Heart right ventricle (tissue), 16 donors: ENCODE measurements at regions of chrX and their contacts with region 1.

Region 1: GRCh38 chrX:23008431-23009099 is 8.8 kb downstream of the DDX53 start:
- DNase-seq: no peak
- ATAC-seq: peak in 1 of 8 donors; percentile 17
- H3K4me3 ChIP-seq: no peak overlapping the region
- H3K27ac ChIP-seq: peak overlapping the region in 4 of 10 donors; percentile 4 to 44 (median 23)
- H3K4me1 ChIP-seq: no peaks in the 10 kb centered on the region
- H3K27me3 ChIP-seq: peaks cover 0 to 4% (median 0%) of the 10 kb centered on the region in 7 donors
- CTCF ChIP-seq: peak in 7 of 9 donors; percentile 13 to 41 (median 28)

Region 2: DNA sequence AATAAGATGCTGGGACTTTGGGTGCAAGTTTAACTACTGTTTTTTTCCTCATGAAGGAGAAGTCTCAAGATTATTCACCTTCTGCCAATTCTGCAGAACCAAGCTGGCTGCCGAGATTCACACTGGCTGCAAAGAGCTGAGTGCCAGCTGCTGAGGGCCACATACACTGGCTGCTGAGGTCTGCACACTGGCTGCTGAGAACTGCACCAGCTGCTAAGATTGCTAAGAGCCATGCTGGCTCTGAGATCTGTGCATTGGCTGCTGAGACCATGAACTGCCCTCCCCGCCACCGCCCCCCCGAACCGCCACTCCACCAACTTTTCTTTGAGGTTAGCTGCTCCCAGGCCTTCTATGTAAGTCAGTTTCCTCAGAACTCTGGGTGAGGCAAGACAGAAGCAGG is 405.5 kb before region 1 on chrX:
- intact Hi-C with region 1: no loop called
- DNase-seq: no peak
- ATAC-seq: no peak
- H3K4me3 ChIP-seq: no peak overlapping the region
- H3K27ac ChIP-seq: no peak overlapping the region
- H3K4me1 ChIP-seq: no peaks in the 10 kb centered on the region
- H3K27me3 ChIP-seq: no peaks in the 10 kb centered on the region
- CTCF ChIP-seq: no peak

Region 3: GRCh38 chrX:23317799-23318724 is 309.5 kb after region 1 on chrX:
- intact Hi-C with region 1: loop called in 1 of 10 experiments (anchors 10 kb)
- DNase-seq: no peak
- ATAC-seq: peak in 5 of 8 donors; percentile 47 to 75 (median 59)
- H3K4me3 ChIP-seq: no peak overlapping the region
- H3K27ac ChIP-seq: no peak overlapping the region
- H3K4me1 ChIP-seq: no peaks in the 10 kb centered on the region
- H3K27me3 ChIP-seq: peaks cover 0 to 5% (median 0%) of the 10 kb centered on the region in 7 donors
- CTCF ChIP-seq: peak; percentile 18 to 77 (median 51)

Region 4: DNA sequence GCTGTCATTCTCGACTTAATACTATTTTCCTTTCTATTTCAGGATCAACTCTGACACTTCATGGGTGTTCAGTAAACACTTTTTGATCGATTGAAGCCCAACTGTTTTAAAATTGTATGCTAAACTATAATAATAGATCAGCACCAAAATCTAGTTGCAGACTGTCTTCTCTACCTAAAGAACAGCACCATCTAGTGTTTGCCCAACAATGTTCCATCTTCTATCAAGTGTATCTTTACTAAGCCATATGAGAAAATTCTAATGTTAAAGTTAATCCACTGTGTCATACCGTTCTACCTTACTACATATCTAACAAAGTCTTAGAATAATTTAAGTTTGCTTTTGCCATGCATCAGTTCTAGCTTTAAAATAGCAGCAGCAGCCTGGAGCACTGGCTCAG is 545.7 kb after region 1 on chrX:
- intact Hi-C with region 1: loop called in 1 of 10 experiments (anchors 10 kb)
- DNase-seq: no peak
- ATAC-seq: no peak
- H3K4me3 ChIP-seq: no peak overlapping the region
- H3K27ac ChIP-seq: no peak overlapping the region
- H3K4me1 ChIP-seq: no peaks in the 10 kb centered on the region
- H3K27me3 ChIP-seq: peaks cover 0 to 24% (median 0%) of the 10 kb centered on the region in 7 donors
- CTCF ChIP-seq: peak in 8 of 9 donors; percentile 27 to 59 (median 51)